Ascending aorta (tissue), 2 donors: ENCODE measurements at regions of chr9 and their contacts with region 1.

Region 1: GRCh38 chr9:97710356-97711222 is 13.4 kb upstream of the XPA start:
- DNase-seq: no peak
- H3K4me3 ChIP-seq: no peak overlapping the region
- H3K27ac ChIP-seq: no peak overlapping the region
- H3K4me1 ChIP-seq: no peaks in the 10 kb centered on the region
- H3K27me3 ChIP-seq: no peaks in the 10 kb centered on the region
- CTCF ChIP-seq: peak; percentile 56 to 85 (median 77)

Region 2: GRCh38 chr9:97749928-97750327 is 39.3 kb after region 1 on chr9:
- intact Hi-C with region 1: no loop called
- DNase-seq: no peak
- H3K4me3 ChIP-seq: no peak overlapping the region
- H3K27ac ChIP-seq: no peak overlapping the region
- H3K4me1 ChIP-seq: no peaks in the 10 kb centered on the region
- H3K27me3 ChIP-seq: no peaks in the 10 kb centered on the region
- CTCF ChIP-seq: no peak

Region 3: DNA sequence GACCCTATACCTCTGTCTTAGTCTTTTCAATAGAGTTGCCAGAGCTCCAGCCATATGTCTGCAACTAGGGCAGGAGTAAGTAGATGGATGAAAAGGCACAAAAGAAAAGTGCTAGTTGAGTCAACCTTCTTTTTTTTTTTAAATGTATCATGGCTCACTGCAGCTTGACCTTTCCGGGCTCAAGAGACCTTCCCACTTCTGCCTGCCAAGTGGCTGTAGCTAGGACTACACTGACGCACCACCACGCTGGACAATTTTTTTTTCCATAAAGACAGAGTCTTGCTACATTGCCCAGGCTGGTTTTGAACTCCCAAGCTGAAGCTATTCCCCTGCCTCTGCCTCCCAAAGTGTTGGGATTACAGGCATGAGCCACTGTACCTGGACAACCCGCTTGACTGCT is 169.7 kb after region 1 on chr9:
- intact Hi-C with region 1: no loop called
- DNase-seq: no peak
- H3K4me3 ChIP-seq: no peak overlapping the region
- H3K27ac ChIP-seq: no peak overlapping the region
- H3K4me1 ChIP-seq: no peaks in the 10 kb centered on the region
- H3K27me3 ChIP-seq: no peaks in the 10 kb centered on the region
- CTCF ChIP-seq: no peak

Region 4: DNA sequence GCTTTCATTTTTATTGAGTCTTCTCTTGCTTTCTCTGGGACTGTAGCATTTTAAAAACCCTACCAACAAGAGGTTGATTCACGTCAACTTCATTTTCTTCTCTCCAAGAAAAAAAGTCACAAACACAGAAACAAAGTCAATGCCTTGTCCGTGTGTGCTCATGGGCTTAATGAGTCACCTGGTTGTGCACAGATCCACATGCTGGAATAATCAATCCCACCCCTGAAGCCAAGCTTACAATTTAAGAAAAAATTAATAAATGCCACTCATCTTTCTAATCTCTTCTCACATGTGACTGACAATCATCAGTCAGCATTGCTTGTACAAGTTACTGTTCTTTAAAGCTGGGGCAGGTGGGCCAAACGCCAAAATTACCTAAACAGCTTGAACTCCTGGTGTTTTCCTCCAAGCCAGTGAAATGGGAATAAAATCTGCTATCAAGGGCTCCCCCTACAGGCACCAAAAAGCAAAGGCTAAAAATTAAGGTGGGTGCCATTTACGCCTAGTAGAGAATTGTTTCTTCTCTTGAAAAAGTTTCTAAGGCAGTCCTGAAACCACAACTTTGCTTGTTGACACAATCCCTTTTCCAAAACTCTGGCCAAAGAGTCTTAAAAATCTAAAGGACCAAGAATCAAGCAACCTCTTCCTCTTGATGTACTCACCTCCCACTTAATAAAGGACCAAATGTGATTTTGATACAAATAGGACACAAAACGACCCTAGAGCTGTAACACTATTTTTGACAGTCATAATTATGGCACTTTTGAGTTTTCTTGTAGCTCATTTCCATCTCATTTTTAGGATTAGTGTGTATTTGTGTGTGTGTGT is 190.4 kb after region 1 on chr9:
- intact Hi-C with region 1: loop called (anchors 1 kb)
- DNase-seq: no peak
- H3K4me3 ChIP-seq: no peak overlapping the region
- H3K27ac ChIP-seq: no peak overlapping the region
- H3K4me1 ChIP-seq: no peaks in the 10 kb centered on the region
- H3K27me3 ChIP-seq: no peaks in the 10 kb centered on the region
- CTCF ChIP-seq: peak; percentile 49 to 68 (median 67)

Region 5: GRCh38 chr9:98263482-98264357 is 553.1 kb after region 1 on chr9:
- intact Hi-C with region 1: loop called (anchors 5 kb)
- DNase-seq: peak in 1 of 2 donors; percentile 83
- H3K4me3 ChIP-seq: no peak overlapping the region
- H3K27ac ChIP-seq: no peak overlapping the region
- H3K4me1 ChIP-seq: no peaks in the 10 kb centered on the region
- H3K27me3 ChIP-seq: no peaks in the 10 kb centered on the region
- CTCF ChIP-seq: peak; percentile 80 to 91 (median 89)